ENCODE measurements at regions of chr10 and their contacts with region 1.

Region 1: GRCh38 chr10:103901299-103901698 is 16.7 kb downstream of the STN1 start:
- DNase-seq: no peak
- ATAC-seq: no peak
- H3K4me3 ChIP-seq: no peak overlapping the region
- H3K4me3 Mint-ChIP-seq: no peak overlapping the region
- H3K27ac ChIP-seq: no peak overlapping the region
- H3K27ac Mint-ChIP-seq: no peak overlapping the region
- H3K4me1 ChIP-seq: no peaks in the 10 kb centered on the region
- H3K4me1 Mint-ChIP-seq: no peaks in the 10 kb centered on the region
- H3K27me3 ChIP-seq: no peaks in the 10 kb centered on the region
- H3K27me3 Mint-ChIP-seq: no peaks in the 10 kb centered on the region
- CTCF ChIP-seq: no peak

Region 2: GRCh38 chr10:104209575-104210198 is 308.4 kb after region 1 on chr10:
- CTCF ChIA-PET with region 1: no interaction called
- POLR2A ChIA-PET with region 1: no interaction called
- intact Hi-C with region 1: loop called (anchors 5 kb)
- DNase-seq: peak; percentile 46
- ATAC-seq: no peak
- H3K4me3 ChIP-seq: no peak overlapping the region
- H3K4me3 Mint-ChIP-seq: no peak overlapping the region
- H3K27ac ChIP-seq: no peak overlapping the region
- H3K27ac Mint-ChIP-seq: no peak overlapping the region
- H3K4me1 ChIP-seq: no peaks in the 10 kb centered on the region
- H3K4me1 Mint-ChIP-seq: no peaks in the 10 kb centered on the region
- H3K27me3 ChIP-seq: peaks cover 0 to 6% (median 0%) of the 10 kb centered on the region in 4 experiments
- H3K27me3 Mint-ChIP-seq: peaks cover 41% of the 10 kb centered on the region
- CTCF ChIP-seq: peak; percentile 64